Endothelial cell of umbilical vein (primary cell): ENCODE measurements at regions of chr4 and their contacts with region 1.

Region 1: DNA sequence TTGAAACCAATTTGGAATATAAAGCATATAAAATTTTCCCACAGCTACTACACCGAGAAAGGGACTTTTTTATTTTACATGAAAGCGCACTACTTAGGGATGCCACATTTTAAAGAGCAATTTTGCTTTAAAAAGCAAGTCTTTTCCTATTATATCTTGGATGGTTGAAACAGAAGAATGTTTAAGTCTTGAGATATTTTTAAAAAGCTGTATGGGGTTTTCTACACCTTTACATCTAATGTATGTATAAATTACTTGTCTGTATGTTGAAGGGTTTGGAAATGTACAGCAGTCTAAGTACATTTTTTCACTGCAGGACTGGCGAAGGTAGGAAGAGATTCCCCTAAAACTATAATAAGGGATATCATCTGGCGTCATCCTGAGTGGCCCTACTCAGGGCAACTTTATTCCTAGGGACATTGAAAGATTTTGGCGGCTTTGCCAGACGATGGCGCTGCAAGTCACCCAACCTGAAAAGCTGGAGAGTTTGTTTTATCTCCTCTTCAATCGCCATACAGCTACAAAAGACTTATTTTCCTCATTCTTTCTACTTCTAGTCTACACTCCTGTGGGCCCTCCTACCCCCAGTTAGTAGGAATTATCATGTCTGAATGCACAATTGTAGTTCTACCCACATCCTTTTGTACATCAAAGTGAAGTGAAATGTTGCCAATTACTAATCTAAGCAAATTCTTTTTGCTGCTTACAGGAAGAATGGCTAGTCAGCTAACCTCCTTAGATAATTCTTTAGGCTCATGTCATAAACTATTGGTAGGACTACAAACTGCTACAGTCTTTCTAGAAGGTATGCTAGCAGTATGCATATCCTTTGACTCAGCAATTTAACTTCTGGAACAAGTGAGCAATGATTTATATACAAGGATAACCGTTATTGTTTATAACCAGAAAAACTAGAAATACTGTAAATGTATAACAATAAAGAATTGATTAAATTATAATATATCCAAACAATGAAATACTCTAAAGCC is 782 bp upstream of the NEK1 start:
- DNase-seq: peak; percentile 85
- H3K4me3 ChIP-seq: peak overlapping the region; percentile 54 to 96 (median 94)
- H3K27ac ChIP-seq: peak overlapping the region; percentile 32
- H3K4me1 ChIP-seq: peaks cover 18% of the 10 kb centered on the region
- H3K27me3 ChIP-seq: no peaks in the 10 kb centered on the region
- CTCF ChIP-seq: peak; percentile 72 to 73
- POLR2A ChIP-seq: no peak

Region 2: GRCh38 chr4:168679397-168680192 is 933.6 kb before region 1 on chr4:
- CTCF ChIA-PET with region 1: no interaction called
- POLR2A ChIA-PET with region 1: no interaction called
- dilution Hi-C with region 1: no loop called
- intact Hi-C with region 1: no loop called
- DNase-seq: no peak
- H3K4me3 ChIP-seq: no peak overlapping the region
- H3K27ac ChIP-seq: no peak overlapping the region
- H3K4me1 ChIP-seq: no peaks in the 10 kb centered on the region
- H3K27me3 ChIP-seq: no peaks in the 10 kb centered on the region
- CTCF ChIP-seq: no peak
- POLR2A ChIP-seq: no peak

Region 3: GRCh38 chr4:169458575-169458974 is 154.6 kb before region 1 on chr4:
- CTCF ChIA-PET with region 1: no interaction called
- POLR2A ChIA-PET with region 1: no interaction called
- dilution Hi-C with region 1: no loop called
- intact Hi-C with region 1: no loop called
- DNase-seq: no peak
- H3K4me3 ChIP-seq: no peak overlapping the region
- H3K27ac ChIP-seq: no peak overlapping the region
- H3K4me1 ChIP-seq: no peaks in the 10 kb centered on the region
- H3K27me3 ChIP-seq: no peaks in the 10 kb centered on the region
- CTCF ChIP-seq: no peak
- POLR2A ChIP-seq: no peak

Region 4: DNA sequence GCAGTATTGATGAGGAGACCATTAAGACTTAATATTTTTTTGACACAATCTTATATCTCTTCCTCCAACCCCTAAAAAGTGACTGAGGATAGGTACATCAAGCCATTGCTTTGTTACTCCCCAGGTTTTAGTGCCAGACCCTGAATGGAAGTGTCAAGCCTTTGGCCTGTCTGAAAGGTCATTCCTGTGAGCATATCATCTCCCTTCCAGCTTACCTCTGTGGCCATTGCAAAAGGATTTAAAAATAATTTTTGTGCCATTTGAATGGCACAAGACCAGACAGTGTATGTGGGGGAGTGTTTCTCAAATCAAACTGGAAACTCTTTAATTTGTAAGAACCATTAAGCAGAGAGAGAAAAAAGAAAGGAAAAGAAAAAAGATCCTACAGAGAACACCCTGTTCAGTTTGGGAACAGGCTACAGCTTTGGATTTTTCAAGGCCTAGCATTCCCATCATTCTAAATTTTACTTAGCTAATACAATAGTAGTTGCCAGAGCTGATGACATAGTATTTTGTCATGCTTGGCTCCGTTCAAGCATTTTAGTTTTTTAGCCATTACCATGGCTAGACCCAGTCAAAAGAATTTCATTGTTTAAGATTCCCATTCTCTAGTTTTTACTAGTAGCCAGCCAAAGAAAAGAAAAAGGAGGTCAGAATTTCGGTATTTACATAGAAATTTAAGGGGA is 94.9 kb after region 1 on chr4:
- CTCF ChIA-PET with region 1: interaction called, 12 read pairs
- POLR2A ChIA-PET with region 1: no interaction called
- dilution Hi-C with region 1: no loop called
- intact Hi-C with region 1: no loop called
- DNase-seq: no peak
- H3K4me3 ChIP-seq: no peak overlapping the region
- H3K27ac ChIP-seq: no peak overlapping the region
- H3K4me1 ChIP-seq: no peaks in the 10 kb centered on the region
- H3K27me3 ChIP-seq: no peaks in the 10 kb centered on the region
- CTCF ChIP-seq: no peak
- POLR2A ChIP-seq: no peak

Region 5: GRCh38 chr4:169757575-169758184 is 144.5 kb after region 1 on chr4 and contains the start of gene HPF1:
- CTCF ChIA-PET with region 1: interaction called, 12 read pairs
- POLR2A ChIA-PET with region 1: no interaction called
- dilution Hi-C with region 1: no loop called
- intact Hi-C with region 1: loop called (anchors 2 kb)
- DNase-seq: peak; percentile 87
- H3K4me3 ChIP-seq: peak within 1 kb of the TSS; percentile 83 to 97 (median 95)
- H3K27ac ChIP-seq: peak within 1 kb of the TSS; percentile 19
- H3K4me1 ChIP-seq: peaks cover 10% of the 10 kb centered on the region
- H3K27me3 ChIP-seq: peaks cover 4 to 8% of the 10 kb centered on the region in 2 experiments
- CTCF ChIP-seq: no peak
- POLR2A ChIP-seq: peak; percentile 79
- total RNA-seq, gene HPF1: 30.1 and 30.3 TPM in 2 replicates

Region 6: DNA sequence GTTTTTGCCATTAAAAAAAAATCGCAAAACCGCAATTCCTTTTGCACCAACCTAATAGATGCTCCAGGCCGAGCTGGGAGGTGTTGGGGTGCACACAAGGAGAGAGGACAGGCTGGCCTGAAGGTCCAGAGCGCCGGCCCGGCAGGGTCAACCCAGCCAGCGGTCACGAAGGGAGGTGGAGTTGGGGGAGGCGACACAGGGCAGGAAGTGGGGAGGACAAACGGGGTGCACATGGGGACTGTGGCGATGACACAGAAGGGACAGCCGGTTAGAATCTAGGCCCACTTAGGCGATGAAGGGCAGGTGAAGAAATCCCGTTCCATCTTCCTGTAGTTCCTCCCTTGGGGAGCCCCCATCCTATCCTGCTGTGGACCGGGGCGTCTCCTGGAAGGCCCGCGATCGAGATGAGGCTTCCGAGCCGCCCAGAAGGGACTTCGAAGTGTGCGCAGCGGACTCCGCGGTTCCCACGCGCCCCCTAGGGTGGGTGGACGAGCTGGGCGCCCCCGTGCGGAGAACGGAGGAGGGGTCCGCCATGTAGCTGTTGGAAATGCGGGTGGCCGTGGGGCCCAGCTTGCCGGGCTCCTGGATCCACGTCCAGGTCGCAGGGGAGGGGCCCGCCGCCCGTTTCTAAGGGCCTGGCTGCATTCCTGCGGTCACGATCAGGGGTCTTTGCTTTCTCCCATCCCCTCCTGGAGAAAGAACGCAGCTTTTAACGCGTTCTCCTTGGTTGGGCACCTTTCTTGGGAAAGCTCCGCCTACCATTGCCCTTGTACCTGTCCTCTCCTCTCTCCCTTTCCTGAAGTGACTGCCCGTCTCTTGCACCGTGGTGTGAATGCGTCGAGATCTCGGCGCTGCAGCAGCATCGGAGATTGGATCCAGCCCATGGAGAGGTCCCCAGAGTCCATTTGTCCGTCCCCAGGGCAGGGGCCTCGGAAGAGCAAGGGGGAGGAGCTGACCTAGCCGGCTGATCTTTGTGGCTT is 161.6 kb after region 1 on chr4:
- CTCF ChIA-PET with region 1: interaction called, 46 read pairs
- POLR2A ChIA-PET with region 1: no interaction called
- dilution Hi-C with region 1: no loop called
- intact Hi-C with region 1: loop called (anchors 1 kb)
- DNase-seq: peak; percentile 42
- H3K4me3 ChIP-seq: no peak overlapping the region
- H3K27ac ChIP-seq: no peak overlapping the region
- H3K4me1 ChIP-seq: peaks cover 9% of the 10 kb centered on the region
- H3K27me3 ChIP-seq: peaks cover 4 to 12% of the 10 kb centered on the region in 2 experiments
- CTCF ChIP-seq: peak; percentile 42 to 79
- POLR2A ChIP-seq: no peak

Region 7: GRCh38 chr4:169810325-169811323 is 197.5 kb after region 1 on chr4:
- CTCF ChIA-PET with region 1: interaction called, 31 read pairs
- POLR2A ChIA-PET with region 1: no interaction called
- dilution Hi-C with region 1: no loop called
- intact Hi-C with region 1: loop called (anchors 1 kb)
- DNase-seq: peak; percentile 68
- H3K4me3 ChIP-seq: no peak overlapping the region
- H3K27ac ChIP-seq: no peak overlapping the region
- H3K4me1 ChIP-seq: no peaks in the 10 kb centered on the region
- H3K27me3 ChIP-seq: peaks cover 3 to 5% of the 10 kb centered on the region in 2 experiments
- CTCF ChIP-seq: peak; percentile 56 to 62
- POLR2A ChIP-seq: no peak

Region 8: DNA sequence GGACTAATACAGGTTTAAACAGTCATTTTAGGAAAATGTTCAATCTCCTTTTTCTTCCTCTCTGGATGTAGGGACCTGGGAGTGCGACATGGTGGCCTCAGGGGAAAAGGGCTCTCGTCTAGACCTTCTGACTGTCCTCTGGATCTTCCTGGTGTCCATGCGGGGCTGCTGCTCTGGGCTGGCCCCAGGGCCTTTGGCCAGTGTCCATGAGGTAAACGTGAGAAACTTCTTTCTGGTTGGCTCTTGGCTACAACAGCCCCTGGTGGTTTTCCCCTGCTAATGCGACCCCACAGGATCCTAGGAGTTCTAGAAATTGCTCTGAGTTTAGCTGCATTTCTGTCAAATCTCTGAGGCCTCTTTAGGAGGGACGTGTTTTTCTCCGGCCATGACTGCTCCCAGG is 327.3 kb after region 1 on chr4:
- CTCF ChIA-PET with region 1: no interaction called
- POLR2A ChIA-PET with region 1: no interaction called
- dilution Hi-C with region 1: no loop called
- intact Hi-C with region 1: no loop called
- DNase-seq: no peak
- H3K4me3 ChIP-seq: no peak overlapping the region
- H3K27ac ChIP-seq: no peak overlapping the region
- H3K4me1 ChIP-seq: no peaks in the 10 kb centered on the region
- H3K27me3 ChIP-seq: no peaks in the 10 kb centered on the region
- CTCF ChIP-seq: no peak
- POLR2A ChIP-seq: no peak

Region 9: GRCh38 chr4:170047771-170048354 is 434.7 kb after region 1 on chr4:
- CTCF ChIA-PET with region 1: interaction called, 50 read pairs
- POLR2A ChIA-PET with region 1: no interaction called
- dilution Hi-C with region 1: no loop called
- intact Hi-C with region 1: loop called (anchors 1 kb)
- DNase-seq: peak; percentile 65
- H3K4me3 ChIP-seq: no peak overlapping the region
- H3K27ac ChIP-seq: no peak overlapping the region
- H3K4me1 ChIP-seq: no peaks in the 10 kb centered on the region
- H3K27me3 ChIP-seq: peaks cover 0 to 1% of the 10 kb centered on the region in 2 experiments
- CTCF ChIP-seq: peak; percentile 51 to 59
- POLR2A ChIP-seq: no peak